ENCODE measurements at regions of chrX and their contacts with region 1.

Region 1: DNA sequence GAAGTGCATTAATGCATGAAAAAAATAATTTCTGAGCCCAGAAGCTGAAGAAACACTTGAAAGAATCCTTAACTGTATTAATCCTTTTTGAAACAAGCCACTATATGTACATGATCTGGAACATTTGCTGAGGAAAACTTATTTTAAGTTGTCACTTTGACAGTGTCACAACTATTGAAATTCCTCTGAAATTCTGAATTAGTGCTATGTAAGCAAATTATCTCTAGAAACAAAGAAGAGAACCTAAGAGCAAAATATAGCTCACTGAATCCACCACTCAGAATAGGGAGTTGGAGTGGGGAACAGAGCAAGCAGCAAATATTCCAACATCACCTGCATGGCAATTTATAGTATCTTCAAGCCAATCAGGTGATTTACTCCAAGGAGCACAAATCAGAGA is 34.6 kb upstream of the FAM47C start:
- DNase-seq: no peak
- H3K4me3 ChIP-seq: no peak overlapping the region
- H3K27ac ChIP-seq: no peak overlapping the region
- H3K4me1 ChIP-seq: no peaks in the 10 kb centered on the region
- H3K27me3 ChIP-seq: no peaks in the 10 kb centered on the region
- CTCF ChIP-seq: no peak

Region 2: GRCh38 chrX:36961590-36961989 is 12.0 kb before region 1 on chrX:
- CTCF ChIA-PET with region 1: no interaction called
- POLR2A ChIA-PET with region 1: interaction called, 20 read pairs
- intact Hi-C with region 1: no loop called
- DNase-seq: no peak
- H3K4me3 ChIP-seq: no peak overlapping the region
- H3K27ac ChIP-seq: no peak overlapping the region
- H3K4me1 ChIP-seq: no peaks in the 10 kb centered on the region
- H3K27me3 ChIP-seq: no peaks in the 10 kb centered on the region
- CTCF ChIP-seq: no peak